AG04449 (cell line): ENCODE measurements at regions of chr11 and their contacts with region 1.

Region 1: DNA sequence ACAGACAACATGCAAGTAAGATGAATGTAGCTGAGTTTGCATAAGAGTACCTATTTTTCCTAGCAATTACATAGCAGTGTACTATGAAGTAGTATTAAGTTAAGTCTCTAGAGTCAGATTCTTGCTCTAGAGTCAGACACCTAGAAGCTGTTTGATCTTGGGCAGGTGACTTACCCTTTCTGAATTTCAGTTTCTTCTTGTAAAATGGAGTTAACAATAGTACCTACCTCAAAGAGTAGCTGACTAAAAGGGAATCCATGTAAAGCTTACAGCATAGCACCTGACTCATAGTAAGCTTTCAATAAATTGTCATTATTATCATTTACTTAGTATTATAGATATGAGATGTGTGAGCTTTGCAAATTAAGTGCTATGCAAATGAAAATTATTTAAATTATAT is 47.8 kb upstream of the PTPRJ start:
- DNase-seq: no peak
- H3K4me3 ChIP-seq: no peak overlapping the region
- CTCF ChIP-seq: no peak

Region 2: DNA sequence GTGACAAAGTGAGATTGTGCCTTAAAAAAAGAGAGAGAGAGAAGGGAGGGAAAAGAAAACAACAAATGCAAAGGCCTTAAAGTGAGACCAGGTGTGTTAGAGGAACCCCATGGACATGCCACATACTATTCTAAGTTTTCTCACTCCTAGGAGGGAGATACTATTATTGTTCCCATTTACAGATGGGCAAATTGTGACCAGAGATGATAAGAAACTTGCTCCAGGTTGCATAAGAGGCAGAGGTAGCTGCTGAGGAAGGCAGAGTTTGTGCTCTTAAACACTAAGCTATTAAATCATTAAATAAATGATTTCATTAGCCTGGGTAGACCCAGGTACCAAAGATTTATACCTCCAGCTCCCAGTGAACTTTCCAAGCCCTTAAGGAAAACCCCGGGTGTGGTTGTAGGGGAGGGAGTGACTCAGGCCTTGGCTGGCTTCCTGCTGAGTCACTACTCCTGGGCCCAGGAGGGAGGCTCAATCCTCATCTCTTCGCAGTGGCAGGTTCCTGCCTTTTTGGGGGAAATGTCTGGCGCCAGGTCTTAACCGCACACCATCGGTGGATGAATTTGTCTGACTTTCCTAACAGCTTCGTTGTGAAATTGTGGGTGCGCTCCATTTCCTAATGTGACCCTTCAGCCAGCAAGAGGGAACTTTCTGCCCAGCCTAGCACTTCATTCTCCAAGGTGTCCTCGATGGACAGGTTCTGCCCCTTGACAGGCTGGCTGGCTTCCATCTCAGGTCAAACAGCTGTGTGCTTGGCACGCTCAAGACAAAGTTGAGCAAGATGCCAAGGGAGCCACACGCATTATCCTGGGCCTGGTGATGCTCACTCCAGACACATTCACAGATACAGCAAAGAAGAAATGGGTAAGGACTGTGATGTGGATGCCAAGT is 14.4 kb after region 1 on chr11:
- CTCF ChIA-PET with region 1: interaction called, 63 read pairs
- POLR2A ChIA-PET with region 1: no interaction called
- DNase-seq: peak; percentile 63
- H3K4me3 ChIP-seq: no peak overlapping the region
- CTCF ChIP-seq: no peak

Region 3: GRCh38 chr11:47955061-47955755 is 22.7 kb after region 1 on chr11:
- CTCF ChIA-PET with region 1: interaction called, 22 read pairs
- POLR2A ChIA-PET with region 1: no interaction called
- DNase-seq: no peak
- H3K4me3 ChIP-seq: no peak overlapping the region
- CTCF ChIP-seq: no peak

Region 4: DNA sequence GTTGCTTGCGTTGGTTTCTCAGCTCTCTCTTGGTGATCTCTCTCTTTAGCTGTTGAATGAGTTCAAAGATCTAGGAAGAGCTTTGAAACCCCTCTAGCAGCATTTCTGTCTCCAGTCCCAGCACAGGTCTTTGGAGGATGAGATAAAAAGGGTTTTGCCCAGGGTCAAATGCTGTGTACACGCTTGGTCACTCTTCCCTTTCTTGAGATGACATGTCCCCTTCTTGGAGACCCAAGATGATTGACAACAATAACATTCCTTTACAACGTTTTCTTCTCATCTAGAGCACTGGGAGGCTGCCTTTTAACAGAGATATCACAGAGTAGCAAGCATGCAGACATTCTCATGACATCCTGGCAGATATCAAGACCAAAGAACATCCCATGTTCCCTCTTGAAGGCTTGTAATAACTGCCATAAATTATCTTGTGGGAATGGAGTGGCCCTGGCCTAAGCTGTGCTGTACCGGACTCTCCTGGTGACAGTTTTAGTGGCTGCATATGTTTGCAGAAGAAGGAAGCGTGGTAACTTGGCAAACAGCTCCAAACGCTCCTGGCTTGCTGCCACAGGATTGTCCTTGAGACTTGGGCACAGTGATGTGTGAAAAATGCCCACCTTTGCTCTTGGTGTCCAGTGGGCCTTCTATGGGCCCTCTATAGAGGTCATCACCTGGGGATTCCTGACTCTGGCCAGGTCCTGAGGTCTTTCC is 155.6 kb after region 1 on chr11:
- CTCF ChIA-PET with region 1: interaction called, 15 read pairs
- POLR2A ChIA-PET with region 1: no interaction called
- DNase-seq: no peak
- H3K4me3 ChIP-seq: no peak overlapping the region
- CTCF ChIP-seq: no peak

Region 5: GRCh38 chr11:48097041-48097476 is 164.5 kb after region 1 on chr11:
- CTCF ChIA-PET with region 1: interaction called, 42 read pairs
- POLR2A ChIA-PET with region 1: no interaction called
- DNase-seq: no peak
- H3K4me3 ChIP-seq: no peak overlapping the region
- CTCF ChIP-seq: no peak

Region 6: DNA sequence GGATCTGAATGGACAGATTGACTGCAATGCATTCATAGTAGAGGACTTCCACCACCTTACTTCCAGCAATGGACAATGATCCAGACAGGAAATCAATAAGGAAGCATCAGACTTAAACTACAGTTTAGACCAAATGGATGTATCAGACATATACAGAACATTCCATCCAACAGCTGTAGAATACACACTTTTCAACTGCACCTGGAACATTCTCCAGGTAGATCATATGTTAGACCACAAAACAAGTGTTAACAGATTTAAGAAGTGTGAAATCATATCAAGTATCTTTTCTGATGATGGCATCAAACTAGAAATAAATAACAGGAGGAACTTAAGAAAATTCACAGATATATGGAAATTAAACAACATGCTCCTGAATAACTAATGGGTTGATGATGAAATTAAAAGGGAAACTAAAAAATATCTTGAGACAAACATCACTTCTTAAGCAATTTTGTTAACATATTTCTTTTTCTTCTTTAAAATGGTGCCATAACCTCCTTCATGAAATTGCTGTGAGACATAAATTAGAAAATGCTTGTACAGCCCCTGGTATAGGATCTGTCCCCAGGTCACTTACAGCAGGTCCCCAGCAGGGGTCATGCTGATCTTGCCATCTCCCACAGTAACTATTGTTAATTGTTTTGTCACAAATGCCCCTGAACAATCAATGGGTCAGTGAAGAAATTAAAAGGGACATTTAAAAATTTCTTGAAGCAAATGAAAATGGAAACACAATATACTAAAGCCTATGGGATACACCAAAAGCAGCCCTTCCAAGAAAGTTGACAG is 184.1 kb after region 1 on chr11:
- CTCF ChIA-PET with region 1: interaction called, 591 read pairs
- POLR2A ChIA-PET with region 1: interaction called, 3 read pairs
- DNase-seq: no peak
- H3K4me3 ChIP-seq: no peak overlapping the region
- CTCF ChIP-seq: peak; percentile 23